GM23248 (cell line): ENCODE measurements at regions of chr21 and their contacts with region 1.

Region 1: DNA sequence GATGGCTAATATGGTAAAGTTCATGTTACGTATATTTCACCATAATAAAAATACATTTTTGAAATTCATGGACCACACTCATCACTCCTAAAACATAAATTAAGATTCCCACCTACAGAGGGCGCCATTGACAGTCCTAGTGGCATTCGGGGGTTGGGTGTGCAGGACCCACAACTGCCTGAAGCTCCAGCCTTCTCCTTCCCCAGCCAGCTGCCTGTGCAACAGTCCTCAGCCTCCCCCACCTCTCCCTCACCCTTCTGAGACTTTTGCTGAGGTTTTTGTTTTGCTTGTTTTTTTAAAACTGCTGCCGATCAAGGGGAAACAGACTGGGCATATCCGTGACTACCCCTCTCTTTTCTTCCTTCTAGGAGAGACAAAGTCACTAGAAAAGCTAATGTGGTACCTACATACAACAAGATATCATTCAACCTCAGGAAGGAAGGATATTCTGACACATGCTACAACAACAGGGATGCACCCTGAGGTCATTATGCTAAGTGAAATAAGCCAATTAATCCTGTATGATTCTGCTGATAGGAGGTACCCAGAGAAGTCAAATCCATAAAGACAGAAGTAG is 9.2 kb upstream of the EVA1C start:
- DNase-seq: peak; percentile 78
- H3K4me3 ChIP-seq: no peak overlapping the region
- H3K27ac ChIP-seq: no peak overlapping the region
- H3K4me1 ChIP-seq: no peaks in the 10 kb centered on the region
- H3K27me3 ChIP-seq: no peaks in the 10 kb centered on the region

Region 2: GRCh38 chr21:32569261-32570230 is 166.3 kb after region 1 on chr21:
- in situ Hi-C with region 1: loop called (anchors 10 kb)
- DNase-seq: peak; percentile 88
- H3K4me3 ChIP-seq: peak overlapping the region; percentile 79
- H3K27ac ChIP-seq: peak overlapping the region; percentile 65
- H3K4me1 ChIP-seq: peaks cover 3% of the 10 kb centered on the region; the same call in 1 of the 2 replicates
- H3K27me3 ChIP-seq: peaks cover 6% of the 10 kb centered on the region; the same call in 1 of the 2 replicates

Region 3: DNA sequence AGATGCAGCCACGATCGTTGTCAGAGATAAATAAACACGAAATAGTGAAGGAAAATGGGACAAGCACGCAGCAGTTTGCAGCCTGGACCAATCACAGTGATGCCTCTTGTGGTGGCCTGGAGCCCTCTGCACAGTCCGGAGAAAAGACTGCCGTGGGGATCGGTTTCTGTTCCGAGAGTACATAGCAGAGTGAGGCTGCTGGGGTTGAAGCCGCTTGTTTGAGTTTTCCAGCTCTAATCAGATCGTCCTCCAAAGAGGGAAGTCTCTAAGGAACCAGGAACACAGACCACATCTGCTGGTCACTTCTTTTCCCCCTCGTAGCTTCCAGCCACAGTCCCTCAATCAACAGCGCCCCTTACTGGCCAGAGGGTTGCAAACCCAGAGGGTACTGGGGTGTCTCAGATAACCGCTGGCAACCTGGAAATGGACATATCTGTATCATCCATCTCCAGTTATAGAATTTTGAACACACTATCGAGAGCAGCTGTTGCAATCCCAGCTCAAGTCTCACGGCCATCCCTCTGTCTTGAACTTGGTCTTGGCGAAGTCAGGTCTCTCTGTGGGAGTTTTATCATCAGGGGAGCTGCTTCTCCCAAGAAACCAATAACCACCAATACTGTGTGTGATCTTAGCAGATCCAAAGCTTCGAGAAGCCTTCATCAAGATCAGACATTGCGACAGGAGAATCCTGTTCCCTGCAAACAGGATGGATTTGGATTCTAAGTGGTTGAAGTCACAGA is 724.0 kb after region 1 on chr21:
- in situ Hi-C with region 1: no loop called
- DNase-seq: peak; percentile 76
- H3K4me3 ChIP-seq: peak overlapping the region; percentile 67
- H3K27ac ChIP-seq: no peak overlapping the region
- H3K4me1 ChIP-seq: no peaks in the 10 kb centered on the region
- H3K27me3 ChIP-seq: peaks cover 49% of the 10 kb centered on the region